Endothelial cell of umbilical vein (primary cell): ENCODE measurements at regions of chr15 and their contacts with region 1.

Region 1: DNA sequence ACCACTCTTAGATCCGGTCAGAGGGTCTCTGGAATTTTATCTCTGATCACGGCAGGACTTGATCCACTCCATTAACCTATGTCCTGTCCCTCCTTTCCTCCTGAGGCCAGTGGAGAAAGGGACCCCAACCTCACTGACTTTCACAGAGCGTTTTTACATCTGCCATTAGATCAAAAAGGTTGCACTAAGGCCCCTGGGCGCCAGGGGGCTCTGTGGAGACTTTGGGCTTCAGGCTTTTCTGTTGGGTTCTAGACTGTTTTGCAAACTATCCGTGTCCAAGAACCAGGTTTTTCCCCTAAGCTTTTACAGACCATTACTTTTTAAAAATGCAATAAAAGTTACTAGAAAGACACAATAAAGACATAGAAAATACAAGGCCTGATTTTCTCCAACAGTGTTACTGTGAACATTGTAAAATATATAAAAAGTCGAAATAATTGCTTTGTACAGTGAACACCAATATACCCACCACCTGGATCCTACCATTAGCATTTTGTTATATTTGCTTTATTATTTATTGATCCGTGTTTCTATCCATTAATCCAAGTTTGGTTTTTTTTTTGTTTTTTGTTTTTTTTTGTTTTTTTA is 159.7 kb downstream of the POLR2M start:
- DNase-seq: peak; percentile 72
- H3K4me3 ChIP-seq: no peak overlapping the region
- H3K27ac ChIP-seq: no peak overlapping the region
- H3K4me1 ChIP-seq: peaks cover 8% of the 10 kb centered on the region
- H3K27me3 ChIP-seq: no peaks in the 10 kb centered on the region
- CTCF ChIP-seq: peak; percentile 84 to 85
- POLR2A ChIP-seq: no peak

Region 2: DNA sequence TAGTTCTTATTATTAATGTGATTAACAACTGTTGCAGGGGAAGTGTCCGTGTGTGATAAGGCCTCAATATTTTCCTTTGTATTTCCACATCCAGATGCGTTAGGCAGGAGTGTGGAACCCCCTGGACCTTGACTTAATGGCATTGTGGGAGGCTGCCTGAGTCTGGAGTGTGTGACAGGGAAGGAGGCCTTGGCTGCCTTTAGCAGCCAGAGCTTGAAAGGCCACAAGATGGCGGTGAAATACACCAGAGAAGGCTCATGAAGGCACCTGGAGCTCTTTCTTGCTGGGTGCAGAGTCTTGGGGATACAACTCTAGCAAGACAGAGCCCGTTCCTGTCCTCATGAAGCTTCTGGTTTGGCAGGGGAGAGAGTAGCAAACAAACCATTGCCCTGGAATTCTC is 122.8 kb before region 1 on chr15:
- CTCF ChIA-PET with region 1: interaction called, 714 read pairs
- POLR2A ChIA-PET with region 1: no interaction called
- dilution Hi-C with region 1: no loop called
- intact Hi-C with region 1: no loop called
- DNase-seq: peak; percentile 12
- H3K4me3 ChIP-seq: no peak overlapping the region
- H3K27ac ChIP-seq: no peak overlapping the region
- H3K4me1 ChIP-seq: no peaks in the 10 kb centered on the region
- H3K27me3 ChIP-seq: no peaks in the 10 kb centered on the region
- CTCF ChIP-seq: peak in 1 of 2 donors; percentile 29
- POLR2A ChIP-seq: no peak

Region 3: GRCh38 chr15:57914350-57915055 is 48.3 kb after region 1 on chr15:
- CTCF ChIA-PET with region 1: no interaction called
- POLR2A ChIA-PET with region 1: no interaction called
- dilution Hi-C with region 1: no loop called
- intact Hi-C with region 1: no loop called
- DNase-seq: peak; percentile 8
- H3K4me3 ChIP-seq: no peak overlapping the region
- H3K27ac ChIP-seq: no peak overlapping the region
- H3K4me1 ChIP-seq: peaks cover 3% of the 10 kb centered on the region
- H3K27me3 ChIP-seq: no peaks in the 10 kb centered on the region
- CTCF ChIP-seq: no peak
- POLR2A ChIP-seq: no peak

Region 4: GRCh38 chr15:57962887-57963286 is 96.6 kb after region 1 on chr15:
- CTCF ChIA-PET with region 1: interaction called, 4 read pairs
- POLR2A ChIA-PET with region 1: no interaction called
- dilution Hi-C with region 1: no loop called
- intact Hi-C with region 1: loop called (anchors 1 kb)
- DNase-seq: no peak
- H3K4me3 ChIP-seq: no peak overlapping the region
- H3K27ac ChIP-seq: no peak overlapping the region
- H3K4me1 ChIP-seq: no peaks in the 10 kb centered on the region
- H3K27me3 ChIP-seq: no peaks in the 10 kb centered on the region
- CTCF ChIP-seq: no peak
- POLR2A ChIP-seq: no peak

Region 5: GRCh38 chr15:58043192-58043903 is 177.1 kb after region 1 on chr15:
- CTCF ChIA-PET with region 1: interaction called, 10 read pairs
- POLR2A ChIA-PET with region 1: no interaction called
- dilution Hi-C with region 1: no loop called
- intact Hi-C with region 1: no loop called
- DNase-seq: peak; percentile 65
- H3K4me3 ChIP-seq: no peak overlapping the region
- H3K27ac ChIP-seq: no peak overlapping the region
- H3K4me1 ChIP-seq: peaks cover 26% of the 10 kb centered on the region
- H3K27me3 ChIP-seq: no peaks in the 10 kb centered on the region
- CTCF ChIP-seq: peak; percentile 52 to 55
- POLR2A ChIP-seq: no peak